AG04449 (cell line): ENCODE measurements at regions of chr15 and their contacts with region 1.

Region 1: DNA sequence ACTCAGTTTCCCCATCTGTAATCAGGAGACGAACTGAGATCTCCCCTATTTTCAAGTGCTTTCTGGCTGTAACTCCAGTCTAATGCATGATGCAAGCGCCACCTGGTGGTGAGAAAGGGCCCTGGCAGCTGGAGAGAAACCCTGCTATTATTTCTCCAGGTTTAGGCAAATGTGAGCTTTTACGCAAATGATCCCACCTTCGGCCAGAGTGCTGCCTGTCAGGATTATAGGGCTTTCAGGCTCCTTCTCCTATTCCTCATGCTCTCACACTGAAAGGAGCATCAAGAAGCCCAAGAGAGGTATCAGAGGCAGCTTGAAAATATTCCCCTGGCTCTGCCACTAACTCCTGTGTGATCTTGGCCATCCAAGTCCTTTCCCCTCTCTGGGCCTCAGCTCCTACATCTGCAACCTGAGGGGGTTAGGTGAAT is 93.9 kb upstream of the RASGRF1 start:
- DNase-seq: no peak
- H3K4me3 ChIP-seq: no peak overlapping the region
- CTCF ChIP-seq: peak; percentile 89

Region 2: GRCh38 chr15:78638658-78639314 is 545.7 kb before region 1 on chr15:
- CTCF ChIA-PET with region 1: interaction called, 18 read pairs
- POLR2A ChIA-PET with region 1: no interaction called
- DNase-seq: no peak
- H3K4me3 ChIP-seq: no peak overlapping the region
- CTCF ChIP-seq: peak; percentile 53

Region 3: DNA sequence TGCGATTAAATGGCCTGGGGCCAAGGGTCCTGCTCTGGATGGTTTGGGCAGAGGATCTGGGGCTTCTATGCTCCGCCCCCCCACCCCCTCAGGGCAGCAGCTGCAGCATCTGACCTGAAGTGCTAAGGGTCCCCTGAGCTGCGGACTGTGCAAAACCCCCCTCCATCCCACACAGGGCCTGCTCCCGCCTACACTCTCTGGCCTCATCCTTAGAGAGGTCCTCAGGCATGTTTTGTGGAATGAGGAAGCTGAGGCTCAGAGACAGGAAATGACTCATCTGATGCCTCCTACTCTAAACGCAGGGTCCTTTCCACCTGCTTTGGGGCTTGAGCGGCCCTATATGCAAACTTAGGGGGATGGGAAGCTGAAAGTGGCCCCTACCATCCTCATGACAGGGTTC is 180.1 kb before region 1 on chr15:
- CTCF ChIA-PET with region 1: interaction called, 11 read pairs
- POLR2A ChIA-PET with region 1: no interaction called
- DNase-seq: no peak
- H3K4me3 ChIP-seq: no peak overlapping the region
- CTCF ChIP-seq: no peak

Region 4: GRCh38 chr15:79028411-79028964 is 156.0 kb before region 1 on chr15:
- CTCF ChIA-PET with region 1: interaction called, 128 read pairs
- POLR2A ChIA-PET with region 1: no interaction called
- DNase-seq: no peak
- H3K4me3 ChIP-seq: no peak overlapping the region
- CTCF ChIP-seq: peak; percentile 73

Region 5: GRCh38 chr15:79172032-79172481 is 12.4 kb before region 1 on chr15:
- CTCF ChIA-PET with region 1: interaction called, 51 read pairs
- POLR2A ChIA-PET with region 1: no interaction called
- DNase-seq: no peak
- H3K4me3 ChIP-seq: no peak overlapping the region
- CTCF ChIP-seq: no peak

Region 6: GRCh38 chr15:79329171-79329611 is 144.7 kb after region 1 on chr15:
- CTCF ChIA-PET with region 1: no interaction called
- POLR2A ChIA-PET with region 1: no interaction called
- DNase-seq: no peak
- H3K4me3 ChIP-seq: no peak overlapping the region
- CTCF ChIP-seq: no peak